Activated CD4-positive, alpha-beta memory T cell treated with anti-CD3 and anti-CD28 coated beads for 36 hours (primary cell): ENCODE measurements at regions of chr20 and their contacts with region 1.

Region 1: GRCh38 chr20:4795394-4795793 is 73.7 kb downstream of the PRND start:
- DNase-seq: peak; percentile 76
- H3K4me3 Mint-ChIP-seq: no peak overlapping the region
- H3K27ac Mint-ChIP-seq: peak overlapping the region; percentile 72
- H3K4me1 Mint-ChIP-seq: peaks cover 25% of the 10 kb centered on the region
- H3K27me3 Mint-ChIP-seq: no peaks in the 10 kb centered on the region

Region 2: DNA sequence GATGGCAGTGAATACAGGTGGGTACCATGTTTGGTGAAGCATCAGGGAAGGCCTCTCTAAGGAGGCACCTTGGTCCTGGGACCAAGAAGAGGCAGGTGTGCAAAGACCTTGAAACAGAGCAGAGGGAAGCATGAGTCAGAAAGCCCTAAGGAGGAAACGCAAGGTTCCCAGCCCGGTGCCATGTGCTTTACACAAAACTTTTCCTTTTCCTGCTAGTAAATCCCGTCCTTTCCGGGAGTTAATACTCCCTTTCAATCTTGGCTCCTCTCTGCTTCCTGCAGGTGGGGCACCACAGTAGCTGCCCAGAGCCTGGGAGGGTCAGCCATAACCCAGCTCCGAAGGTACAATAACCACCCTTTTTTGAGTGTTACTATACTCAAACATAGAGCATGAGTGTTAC is 225.4 kb after region 1 on chr20:
- CTCF ChIA-PET with region 1: no interaction called
- POLR2A ChIA-PET with region 1: no interaction called
- intact Hi-C with region 1: no loop called
- DNase-seq: no peak
- H3K4me3 Mint-ChIP-seq: no peak overlapping the region
- H3K27ac Mint-ChIP-seq: no peak overlapping the region
- H3K4me1 Mint-ChIP-seq: no peaks in the 10 kb centered on the region
- H3K27me3 Mint-ChIP-seq: no peaks in the 10 kb centered on the region

Region 3: DNA sequence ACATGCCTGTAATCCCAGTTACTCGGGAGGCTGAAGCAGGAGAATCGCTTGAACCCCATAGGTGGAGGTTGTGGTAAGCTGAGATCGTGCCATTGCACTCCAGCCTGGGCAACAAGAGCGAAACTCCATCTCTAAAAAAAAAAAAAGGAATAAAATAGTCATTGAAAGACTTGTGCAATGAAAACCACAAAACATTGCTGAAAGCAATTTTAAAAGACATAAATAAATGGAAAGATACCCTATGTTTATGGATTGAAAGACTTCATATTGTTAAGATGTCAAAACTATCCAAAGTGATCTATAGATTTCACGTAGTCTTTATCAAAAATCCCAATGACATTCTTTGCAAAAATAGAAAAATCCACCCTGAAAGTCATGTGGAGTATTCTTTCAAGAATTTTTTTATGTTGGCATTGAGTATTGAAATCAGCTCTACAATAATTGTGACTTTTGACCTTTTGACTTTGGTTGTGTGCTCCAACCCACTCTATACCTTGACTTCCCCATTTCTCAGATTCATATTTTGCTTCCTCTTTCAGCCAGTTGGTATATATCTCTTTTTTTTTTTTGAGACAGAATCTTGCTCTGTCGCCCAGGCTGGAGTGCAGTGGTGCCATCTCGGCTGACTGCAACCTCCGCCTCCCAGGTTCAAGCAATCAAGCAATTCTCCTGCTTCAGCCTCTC is 251.4 kb after region 1 on chr20:
- CTCF ChIA-PET with region 1: no interaction called
- POLR2A ChIA-PET with region 1: no interaction called
- intact Hi-C with region 1: loop called (anchors 5 kb)
- DNase-seq: no peak
- H3K4me3 Mint-ChIP-seq: no peak overlapping the region
- H3K27ac Mint-ChIP-seq: no peak overlapping the region
- H3K4me1 Mint-ChIP-seq: no peaks in the 10 kb centered on the region
- H3K27me3 Mint-ChIP-seq: no peaks in the 10 kb centered on the region